Activated CD4-positive, alpha-beta T cell treated with anti-CD3 and anti-CD28 coated beads, Interleukin-2, amount 10 ng/mL, durations not matched to agents 24 days and 14 days (primary cell): ENCODE measurements at regions of chr4 and their contacts with region 1.

Region 1: DNA sequence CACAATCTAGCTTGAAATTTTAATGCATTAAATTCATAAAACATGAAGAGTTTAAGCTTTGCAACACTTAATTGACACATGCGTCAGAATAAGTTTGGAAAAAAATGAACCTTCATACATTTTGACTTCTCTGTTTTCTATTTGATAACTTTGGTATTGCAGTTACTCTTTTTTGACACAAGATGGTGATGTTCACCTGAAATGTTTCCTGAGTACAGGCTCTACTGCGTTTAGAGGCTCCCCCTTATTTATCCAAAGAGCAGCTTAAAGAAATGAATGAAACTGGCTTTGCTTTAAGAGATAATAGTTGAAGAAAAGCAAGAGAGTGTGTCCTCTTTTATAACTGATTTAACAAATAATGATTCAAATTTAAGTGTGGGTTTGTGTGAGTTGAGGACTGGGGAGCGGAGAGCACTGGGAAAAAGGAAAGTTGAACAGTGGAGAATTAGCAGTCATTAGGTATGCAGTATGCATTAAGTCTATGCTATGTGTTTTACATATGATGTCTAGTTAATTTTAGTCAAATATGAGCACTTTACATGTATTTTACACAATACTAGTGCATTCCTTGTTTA is 180.6 kb upstream of the NUDT6 start:
- DNase-seq: no peak
- H3K4me3 Mint-ChIP-seq: no peak overlapping the region
- H3K27ac Mint-ChIP-seq: no peak overlapping the region
- H3K4me1 Mint-ChIP-seq: peaks cover 2% of the 10 kb centered on the region
- H3K27me3 Mint-ChIP-seq: no peaks in the 10 kb centered on the region

Region 2: GRCh38 chr4:123017636-123018395 is 85.2 kb before region 1 on chr4:
- intact Hi-C with region 1: no loop called
- DNase-seq: no peak
- H3K4me3 Mint-ChIP-seq: no peak overlapping the region
- H3K27ac Mint-ChIP-seq: no peak overlapping the region
- H3K4me1 Mint-ChIP-seq: no peaks in the 10 kb centered on the region
- H3K27me3 Mint-ChIP-seq: no peaks in the 10 kb centered on the region

Region 3: GRCh38 chr4:123043013-123043412 is 60.0 kb before region 1 on chr4:
- intact Hi-C with region 1: no loop called
- DNase-seq: no peak
- H3K4me3 Mint-ChIP-seq: no peak overlapping the region
- H3K27ac Mint-ChIP-seq: no peak overlapping the region
- H3K4me1 Mint-ChIP-seq: peaks cover 4% of the 10 kb centered on the region
- H3K27me3 Mint-ChIP-seq: no peaks in the 10 kb centered on the region

Region 4: GRCh38 chr4:123259676-123260646 is 157.0 kb after region 1 on chr4:
- intact Hi-C with region 1: no loop called
- DNase-seq: no peak
- H3K4me3 Mint-ChIP-seq: no peak overlapping the region
- H3K27ac Mint-ChIP-seq: no peak overlapping the region
- H3K4me1 Mint-ChIP-seq: no peaks in the 10 kb centered on the region
- H3K27me3 Mint-ChIP-seq: no peaks in the 10 kb centered on the region

Region 5: DNA sequence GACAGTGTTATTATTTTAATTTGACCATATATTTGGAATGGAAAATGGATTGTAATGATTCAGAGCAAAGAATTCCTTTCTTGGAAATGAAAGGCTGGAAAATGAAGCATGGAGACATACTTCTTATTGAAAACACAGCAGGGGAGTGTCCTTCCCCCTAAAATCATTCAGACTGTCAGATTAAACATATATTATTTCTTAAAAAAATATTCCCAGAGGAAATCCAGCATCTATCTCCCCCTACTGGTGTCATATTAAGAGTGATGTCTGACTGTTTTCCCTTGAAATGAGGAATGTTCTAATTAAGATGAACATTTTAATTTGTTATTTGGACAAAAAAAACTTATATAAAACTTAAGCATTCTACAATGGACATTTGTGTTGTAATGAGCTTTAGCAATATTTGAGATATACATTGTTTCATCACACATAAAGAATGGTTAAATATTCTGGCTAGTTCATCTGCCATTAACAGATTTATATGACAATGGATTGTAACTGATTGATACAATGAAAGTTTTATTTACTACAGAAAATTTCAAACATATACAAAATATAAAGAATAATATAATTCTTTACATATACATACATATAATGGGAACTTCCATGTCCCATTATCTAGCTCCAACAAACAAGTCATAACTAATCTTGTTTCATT is 558.2 kb after region 1 on chr4:
- intact Hi-C with region 1: loop called (anchors 2 kb)
- DNase-seq: no peak
- H3K4me3 Mint-ChIP-seq: no peak overlapping the region
- H3K27ac Mint-ChIP-seq: no peak overlapping the region
- H3K4me1 Mint-ChIP-seq: peaks cover 10% of the 10 kb centered on the region
- H3K27me3 Mint-ChIP-seq: peaks cover 27% of the 10 kb centered on the region

Region 6: GRCh38 chr4:124262211-124263179 is 1159.5 kb after region 1 on chr4:
- intact Hi-C with region 1: loop called (anchors 2 kb)
- DNase-seq: peak; percentile 82
- H3K4me3 Mint-ChIP-seq: no peak overlapping the region
- H3K27ac Mint-ChIP-seq: no peak overlapping the region
- H3K4me1 Mint-ChIP-seq: no peaks in the 10 kb centered on the region
- H3K27me3 Mint-ChIP-seq: peaks cover 4% of the 10 kb centered on the region

Region 7: DNA sequence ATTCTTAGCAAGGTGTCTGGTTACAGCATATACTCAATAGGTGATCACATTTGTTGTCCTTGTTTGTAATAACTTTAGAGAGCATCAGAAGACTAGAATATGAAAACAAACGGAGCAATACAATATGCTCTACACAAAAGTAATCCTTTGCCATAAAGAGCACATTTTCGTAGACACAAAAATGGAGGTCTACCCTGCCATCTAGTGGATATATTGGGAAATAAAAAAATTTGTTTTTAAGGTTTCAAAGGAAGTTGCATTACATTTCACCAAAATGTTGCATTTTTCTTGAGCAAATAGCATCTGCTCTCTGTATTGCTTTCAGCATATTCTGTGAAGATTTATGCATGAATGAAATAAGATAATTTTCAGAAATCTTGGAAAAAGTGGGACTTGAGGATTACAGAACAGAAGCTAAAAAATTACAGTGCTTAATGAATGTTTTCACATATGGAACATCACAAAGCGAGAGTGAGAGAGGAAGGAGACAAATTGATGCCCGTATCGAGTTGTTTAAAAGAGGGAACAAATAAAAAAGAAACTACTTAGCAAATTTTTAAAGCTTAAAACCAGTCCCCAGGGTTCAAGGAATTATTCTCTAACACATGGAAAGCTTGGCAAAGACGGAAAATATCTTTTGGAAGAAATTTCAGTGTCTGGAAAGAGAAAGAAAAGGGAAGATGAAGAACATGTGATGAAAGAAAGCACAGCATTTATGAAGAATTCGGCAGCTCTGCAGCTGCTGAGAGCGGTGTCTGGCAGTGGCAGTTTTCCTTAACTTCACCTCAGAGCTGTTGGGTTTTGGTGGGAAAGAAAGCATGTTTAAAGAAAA is 1219.5 kb after region 1 on chr4:
- intact Hi-C with region 1: loop called (anchors 5 kb)
- DNase-seq: no peak
- H3K4me3 Mint-ChIP-seq: no peak overlapping the region
- H3K27ac Mint-ChIP-seq: no peak overlapping the region
- H3K4me1 Mint-ChIP-seq: no peaks in the 10 kb centered on the region
- H3K27me3 Mint-ChIP-seq: peaks cover 3% of the 10 kb centered on the region